SK-MEL-5 (cell line): ENCODE measurements at regions of chr9 and their contacts with region 1.

Region 1: GRCh38 chr9:97921959-97922724 is at the start of gene TRMO:
- DNase-seq: peak; percentile 97
- total RNA-seq, gene TRMO: 28.6 and 32.6 TPM in 2 replicates

Region 2: DNA sequence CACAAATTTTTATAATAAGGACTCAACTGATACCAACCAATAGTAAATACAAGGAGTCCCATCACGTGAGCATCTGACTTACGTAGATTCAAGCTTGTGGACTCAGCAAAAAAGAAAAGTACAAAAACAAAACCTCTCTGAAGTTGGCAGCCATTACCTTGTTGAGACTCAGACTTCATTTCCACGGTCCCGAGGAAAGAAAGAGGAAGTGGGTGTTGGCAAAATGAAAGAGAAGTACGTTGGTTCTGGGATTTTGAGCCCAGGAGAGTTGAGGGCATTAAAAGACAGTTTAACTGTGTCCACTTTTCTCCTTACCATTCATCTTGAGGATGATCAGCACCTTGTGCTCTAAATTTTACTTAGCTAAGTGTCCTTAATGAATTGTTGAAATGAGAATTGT is 261.8 kb before region 1 on chr9:
- in situ Hi-C with region 1: no loop called
- DNase-seq: no peak

Region 3: DNA sequence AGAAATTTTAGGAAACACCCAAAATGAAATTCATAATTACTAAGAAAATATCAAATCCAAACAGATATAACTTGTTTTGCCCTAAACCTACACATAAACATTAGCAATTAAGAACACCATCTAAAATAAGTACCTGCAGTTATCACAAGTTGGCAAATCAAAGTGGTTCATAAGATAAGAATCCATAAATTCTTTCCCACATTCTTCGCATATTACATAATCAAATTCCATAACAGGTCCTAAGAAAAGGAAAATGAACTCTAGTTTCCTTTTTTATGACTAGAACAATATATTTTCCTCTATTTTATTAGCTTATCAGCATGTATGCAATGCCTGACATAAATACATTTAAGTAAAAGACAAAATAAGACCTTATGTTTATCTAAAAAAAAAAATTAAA is 232.7 kb before region 1 on chr9:
- in situ Hi-C with region 1: no loop called
- DNase-seq: no peak

Region 4: GRCh38 chr9:97954550-97954989 is 32.4 kb after region 1 on chr9:
- in situ Hi-C with region 1: no loop called
- DNase-seq: peak; percentile 72

Region 5: GRCh38 chr9:98010445-98010844 is 88.3 kb after region 1 on chr9:
- in situ Hi-C with region 1: loop called (anchors 10 kb)
- DNase-seq: peak; percentile 10

Region 6: GRCh38 chr9:98064623-98065392 is 142.7 kb after region 1 on chr9:
- in situ Hi-C with region 1: no loop called
- DNase-seq: no peak